Natural killer cell (primary cell): ENCODE measurements at regions of chr1 and their contacts with region 1.

Region 1: DNA sequence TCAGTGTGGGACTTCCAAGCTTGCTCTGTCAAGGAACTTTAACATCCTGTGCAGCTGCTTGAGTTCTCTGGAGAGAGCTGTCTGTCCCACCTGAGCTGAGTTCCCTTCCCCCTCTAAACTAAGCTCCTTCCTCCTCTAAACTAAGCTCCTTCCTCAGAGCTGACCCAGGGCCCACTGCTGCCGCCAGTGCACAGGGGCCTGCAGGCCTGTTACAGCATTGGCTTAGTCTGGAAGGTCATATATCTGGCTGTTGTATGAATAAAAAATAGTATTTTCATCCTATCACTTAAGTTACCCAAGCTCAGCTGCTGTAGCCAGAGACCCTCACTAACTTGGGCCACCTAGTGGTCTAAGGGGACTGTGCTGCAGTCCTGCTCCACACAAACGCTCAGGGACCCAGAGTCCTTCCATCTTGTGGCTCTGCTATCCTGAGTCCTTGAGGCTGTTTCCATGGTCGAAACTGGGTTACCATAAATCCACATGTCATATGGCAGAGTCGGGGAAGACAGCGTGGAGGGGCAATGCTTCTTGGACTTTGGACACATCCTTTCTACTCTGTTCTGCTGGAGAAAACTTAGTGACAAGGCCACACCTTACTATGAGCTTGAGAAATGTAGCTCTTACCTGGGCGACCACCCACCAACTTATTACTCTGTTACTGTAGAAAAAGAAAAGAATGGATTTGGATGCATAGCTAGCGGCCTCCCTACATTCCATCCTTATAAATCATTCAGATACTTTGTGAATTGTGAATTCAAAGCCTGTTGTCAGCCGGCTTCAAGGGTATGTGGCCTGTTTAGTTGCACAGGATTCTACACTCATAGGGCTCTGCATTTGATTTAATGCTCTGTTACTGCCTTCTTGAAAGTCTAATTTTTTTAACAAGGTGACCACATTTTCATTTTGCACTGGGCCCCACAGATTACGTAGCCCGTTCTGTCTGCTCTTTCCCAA is 71.4 kb upstream of the GCLM start:
- DNase-seq: peak in 1 of 2 donors; percentile 5
- ATAC-seq: no peak
- H3K4me3 ChIP-seq: no peak overlapping the region
- H3K4me3 Mint-ChIP-seq: no peak overlapping the region
- H3K27ac ChIP-seq: no peak overlapping the region
- H3K27ac Mint-ChIP-seq: no peak overlapping the region
- H3K4me1 ChIP-seq: no peaks in the 10 kb centered on the region
- H3K4me1 Mint-ChIP-seq: no peaks in the 10 kb centered on the region
- H3K27me3 ChIP-seq: no peaks in the 10 kb centered on the region
- H3K27me3 Mint-ChIP-seq: peaks cover 0 to 7% of the 10 kb centered on the region in 2 donors
- CTCF ChIP-seq: no peak

Region 2: DNA sequence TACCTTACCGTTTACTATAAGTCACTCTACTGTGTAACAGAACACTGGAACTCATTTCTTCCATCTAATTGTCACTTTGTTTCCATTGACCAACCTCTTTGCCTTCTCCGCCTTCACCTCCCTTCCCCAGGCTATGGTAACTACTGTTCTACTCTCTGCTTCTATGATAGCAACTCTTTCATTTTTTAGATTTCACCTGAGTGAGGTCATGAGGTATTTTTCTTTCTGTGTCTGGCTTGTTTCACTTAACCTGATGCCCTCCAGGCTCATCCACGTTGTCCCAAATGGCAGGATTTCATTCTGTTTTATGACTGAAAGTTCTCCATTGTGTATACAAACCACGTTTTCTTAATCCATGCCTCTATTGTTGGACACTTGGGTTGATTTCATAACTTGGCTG is 35.9 kb before region 1 on chr1:
- intact Hi-C with region 1: loop called (anchors 1 kb)
- DNase-seq: no peak
- ATAC-seq: no peak
- H3K4me3 ChIP-seq: no peak overlapping the region
- H3K4me3 Mint-ChIP-seq: no peak overlapping the region
- H3K27ac ChIP-seq: no peak overlapping the region
- H3K27ac Mint-ChIP-seq: no peak overlapping the region
- H3K4me1 ChIP-seq: no peaks in the 10 kb centered on the region
- H3K4me1 Mint-ChIP-seq: no peaks in the 10 kb centered on the region
- H3K27me3 ChIP-seq: no peaks in the 10 kb centered on the region
- H3K27me3 Mint-ChIP-seq: peaks cover 9 to 20% of the 10 kb centered on the region in 2 donors
- CTCF ChIP-seq: no peak

Region 3: DNA sequence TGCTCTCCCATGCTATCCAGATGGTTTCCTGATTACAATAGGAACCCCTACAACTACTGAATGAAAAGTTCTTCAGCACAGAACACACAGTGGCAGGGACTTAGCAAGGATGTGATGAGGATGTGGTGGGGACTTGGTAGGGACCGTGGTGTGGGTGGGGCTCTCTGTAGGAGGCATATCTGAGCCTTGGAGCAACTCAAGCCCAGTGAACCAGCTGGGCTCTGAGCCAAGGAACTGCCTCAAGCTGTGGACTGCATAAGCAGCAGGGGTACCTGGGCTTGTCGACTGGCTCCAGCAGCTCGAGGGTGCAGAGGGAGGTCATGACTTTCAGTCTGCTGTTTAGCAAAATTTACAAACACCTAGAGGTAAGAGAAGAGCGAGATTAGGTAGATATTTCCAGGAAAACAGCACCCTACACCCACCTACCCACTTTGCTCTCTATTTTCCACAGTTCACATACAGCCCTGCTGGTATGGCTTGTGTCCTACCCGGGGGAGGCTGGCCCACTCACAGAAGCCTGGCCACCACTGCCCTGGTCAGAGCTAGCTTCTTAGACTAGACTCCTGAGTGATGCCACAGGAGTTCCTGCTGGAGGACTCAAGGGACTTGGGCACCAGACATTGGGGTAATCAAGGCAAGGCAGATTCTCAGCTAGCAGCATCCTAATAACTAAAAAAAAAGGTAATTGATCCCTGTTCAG is 15.4 kb after region 1 on chr1:
- intact Hi-C with region 1: no loop called
- DNase-seq: no peak
- ATAC-seq: peak in 1 of 3 donors; percentile 35
- H3K4me3 ChIP-seq: no peak overlapping the region
- H3K4me3 Mint-ChIP-seq: no peak overlapping the region
- H3K27ac ChIP-seq: no peak overlapping the region
- H3K27ac Mint-ChIP-seq: peak overlapping the region in 1 of 2 donors; percentile 2
- H3K4me1 ChIP-seq: peaks cover 8% of the 10 kb centered on the region
- H3K4me1 Mint-ChIP-seq: peaks cover 34 to 44% of the 10 kb centered on the region in 2 donors
- H3K27me3 ChIP-seq: no peaks in the 10 kb centered on the region
- H3K27me3 Mint-ChIP-seq: no peaks in the 10 kb centered on the region
- CTCF ChIP-seq: no peak